CD14-positive monocyte (primary cell): ENCODE measurements at regions of chr12 and their contacts with region 1.

Region 1: GRCh38 chr12:17763366-17763765 is 326.6 kb downstream of the RERGL start:
- DNase-seq: no peak
- H3K4me3 ChIP-seq: no peak overlapping the region
- H3K4me3 Mint-ChIP-seq: no peak overlapping the region
- H3K27ac ChIP-seq: no peak overlapping the region
- H3K27ac Mint-ChIP-seq: no peak overlapping the region
- H3K4me1 ChIP-seq: no peaks in the 10 kb centered on the region
- H3K4me1 Mint-ChIP-seq: no peaks in the 10 kb centered on the region
- H3K27me3 ChIP-seq: no peaks in the 10 kb centered on the region
- H3K27me3 Mint-ChIP-seq: no peaks in the 10 kb centered on the region
- CTCF ChIP-seq: no peak

Region 2: DNA sequence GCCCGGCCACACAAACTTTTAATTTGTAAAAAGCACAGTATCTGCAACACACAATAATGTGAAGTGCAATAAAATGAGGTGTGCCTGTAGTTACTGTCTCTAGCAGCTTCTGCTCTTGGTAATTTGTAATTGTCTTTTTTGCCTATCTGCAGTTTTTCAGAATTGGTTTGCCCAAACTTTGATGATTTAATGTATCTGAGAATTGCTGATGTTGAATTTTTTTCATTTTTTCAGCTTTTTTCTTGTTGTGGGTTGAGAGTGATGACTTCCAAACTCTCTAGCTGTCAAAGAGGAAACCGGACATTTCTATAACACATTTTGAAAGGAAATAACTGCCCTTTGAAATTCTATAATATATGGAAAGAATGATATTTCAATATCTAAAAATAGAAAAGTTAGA is 89.7 kb after region 1 on chr12:
- intact Hi-C with region 1: loop called in 1 of 2 experiments (anchors 5 kb)
- DNase-seq: no peak
- H3K4me3 ChIP-seq: no peak overlapping the region
- H3K4me3 Mint-ChIP-seq: no peak overlapping the region
- H3K27ac ChIP-seq: no peak overlapping the region
- H3K27ac Mint-ChIP-seq: no peak overlapping the region
- H3K4me1 ChIP-seq: no peaks in the 10 kb centered on the region
- H3K4me1 Mint-ChIP-seq: no peaks in the 10 kb centered on the region
- H3K27me3 ChIP-seq: no peaks in the 10 kb centered on the region
- H3K27me3 Mint-ChIP-seq: no peaks in the 10 kb centered on the region
- CTCF ChIP-seq: no peak

Region 3: GRCh38 chr12:18101043-18101442 is 337.7 kb after region 1 on chr12:
- intact Hi-C with region 1: no loop called
- DNase-seq: no peak
- H3K4me3 ChIP-seq: no peak overlapping the region
- H3K4me3 Mint-ChIP-seq: no peak overlapping the region
- H3K27ac ChIP-seq: no peak overlapping the region
- H3K27ac Mint-ChIP-seq: no peak overlapping the region
- H3K4me1 ChIP-seq: no peaks in the 10 kb centered on the region
- H3K4me1 Mint-ChIP-seq: no peaks in the 10 kb centered on the region
- H3K27me3 ChIP-seq: no peaks in the 10 kb centered on the region
- H3K27me3 Mint-ChIP-seq: no peaks in the 10 kb centered on the region
- CTCF ChIP-seq: no peak